SK-N-SH (cell line): ENCODE measurements at regions of chr1 and their contacts with region 1.

Region 1: GRCh38 chr1:7580923-7581753 is 190.0 kb upstream of the VAMP3 start:
- DNase-seq: no peak
- H3K4me3 ChIP-seq: no peak overlapping the region
- H3K27ac ChIP-seq: peak overlapping the region in 1 of 2 experiments; percentile 99; a peak in 2 of 4 replicates
- H3K4me1 ChIP-seq: peaks cover 0 to 49% of the 10 kb centered on the region in 2 experiments; a peak in 2 of 4 replicates
- H3K27me3 ChIP-seq: no peaks in the 10 kb centered on the region
- CTCF ChIP-seq: no peak
- EP300 ChIP-seq: no peak
- RAD21 ChIP-seq: no peak

Region 2: GRCh38 chr1:7549277-7550161 is 31.6 kb before region 1 on chr1:
- CTCF ChIA-PET with region 1: interaction called, 14 read pairs
- POLR2A ChIA-PET with region 1: no interaction called
- DNase-seq: no peak
- H3K4me3 ChIP-seq: no peak overlapping the region
- H3K27ac ChIP-seq: peak overlapping the region; percentile 11 to 75
- H3K4me1 ChIP-seq: peaks cover 11 to 41% of the 10 kb centered on the region in 2 experiments; a peak in 3 of 4 replicates
- H3K27me3 ChIP-seq: no peaks in the 10 kb centered on the region
- CTCF ChIP-seq: no peak
- EP300 ChIP-seq: 0 out of 4 replicates have a peak, but pooled peaks have one; percentile 20 to 25
- RAD21 ChIP-seq: no peak

Region 3: DNA sequence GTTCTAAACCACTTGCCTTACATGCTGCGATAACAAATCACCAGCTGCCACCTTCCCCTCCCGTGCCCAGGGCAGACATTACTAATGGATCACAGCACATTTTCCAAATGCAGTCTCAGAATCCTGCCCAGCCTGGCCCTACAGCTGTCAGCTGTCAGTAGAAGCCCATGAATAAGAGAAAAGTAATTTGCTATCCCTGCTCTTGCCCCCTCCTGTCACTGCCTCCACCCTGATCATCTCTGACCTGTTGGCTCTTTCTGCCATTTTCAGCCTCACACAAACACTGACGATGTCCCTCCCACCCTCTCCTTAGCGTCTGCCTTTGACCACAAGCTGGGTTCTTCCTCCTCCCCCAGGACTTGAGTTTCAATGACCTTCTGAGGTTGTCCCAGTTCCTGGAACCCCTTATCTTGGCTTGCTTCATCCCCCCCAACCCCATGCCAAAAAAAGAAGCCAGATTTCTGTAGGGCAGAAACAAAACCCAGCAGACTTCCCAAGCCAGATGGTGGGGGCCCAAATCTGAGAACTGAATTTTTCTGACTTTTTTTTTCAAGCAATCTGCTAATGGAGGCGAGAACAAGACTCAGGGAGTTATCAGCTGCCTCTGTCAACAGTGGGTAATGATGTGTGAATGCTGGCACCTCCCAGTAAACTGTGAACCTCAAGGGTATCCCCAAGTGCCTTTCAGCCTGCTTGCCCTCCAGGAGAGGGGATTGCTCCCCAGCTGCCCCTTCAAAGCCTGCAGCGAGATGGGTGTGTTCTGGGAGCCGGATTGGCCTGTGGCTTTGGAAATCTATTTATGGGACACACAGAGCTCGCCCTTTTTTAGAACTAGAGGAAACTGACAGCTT is 26.5 kb before region 1 on chr1:
- CTCF ChIA-PET with region 1: interaction called, 18 read pairs
- POLR2A ChIA-PET with region 1: interaction called, 43 read pairs
- DNase-seq: no peak
- H3K4me3 ChIP-seq: no peak overlapping the region
- H3K27ac ChIP-seq: peak overlapping the region in 1 of 2 experiments; percentile 100; a peak in 2 of 4 replicates
- H3K4me1 ChIP-seq: peaks cover 6 to 83% of the 10 kb centered on the region in 2 experiments; a peak in 3 of 4 replicates
- H3K27me3 ChIP-seq: no peaks in the 10 kb centered on the region
- CTCF ChIP-seq: no peak
- EP300 ChIP-seq: no peak
- RAD21 ChIP-seq: no peak

Region 4: DNA sequence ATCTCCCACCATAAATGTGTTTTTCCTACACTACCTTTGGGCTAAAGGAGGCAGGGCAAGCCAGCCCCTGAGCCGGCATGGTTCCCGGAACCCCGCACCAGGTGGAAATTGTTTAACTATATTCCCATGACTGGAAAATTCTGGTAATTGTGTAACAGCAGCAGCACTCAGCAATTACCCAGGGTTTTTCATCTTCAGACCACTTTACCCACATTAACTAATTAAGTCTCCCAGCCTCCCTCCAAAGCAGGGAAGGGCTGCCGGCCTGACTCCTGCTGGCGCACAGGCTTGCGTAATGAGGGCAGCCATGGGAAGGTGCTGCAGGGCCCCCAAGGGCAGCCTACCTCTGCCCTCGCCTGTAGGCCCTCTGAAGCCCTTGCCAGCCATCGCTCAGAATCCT is 49.2 kb after region 1 on chr1:
- CTCF ChIA-PET with region 1: interaction called, 32 read pairs
- POLR2A ChIA-PET with region 1: interaction called, 37 read pairs
- DNase-seq: peak; percentile 90
- H3K4me3 ChIP-seq: no peak overlapping the region
- H3K27ac ChIP-seq: peak overlapping the region; percentile 32 to 100; a peak in 3 of 4 replicates
- H3K4me1 ChIP-seq: peaks cover 0 to 89% of the 10 kb centered on the region in 2 experiments; a peak in 2 of 4 replicates
- H3K27me3 ChIP-seq: peaks cover 6% of the 10 kb centered on the region; the same call in 1 of the 2 replicates
- CTCF ChIP-seq: no peak
- EP300 ChIP-seq: peak in 1 of 2 experiments; percentile 93; a peak in 2 of 4 replicates
- RAD21 ChIP-seq: peak; percentile 41

Region 5: DNA sequence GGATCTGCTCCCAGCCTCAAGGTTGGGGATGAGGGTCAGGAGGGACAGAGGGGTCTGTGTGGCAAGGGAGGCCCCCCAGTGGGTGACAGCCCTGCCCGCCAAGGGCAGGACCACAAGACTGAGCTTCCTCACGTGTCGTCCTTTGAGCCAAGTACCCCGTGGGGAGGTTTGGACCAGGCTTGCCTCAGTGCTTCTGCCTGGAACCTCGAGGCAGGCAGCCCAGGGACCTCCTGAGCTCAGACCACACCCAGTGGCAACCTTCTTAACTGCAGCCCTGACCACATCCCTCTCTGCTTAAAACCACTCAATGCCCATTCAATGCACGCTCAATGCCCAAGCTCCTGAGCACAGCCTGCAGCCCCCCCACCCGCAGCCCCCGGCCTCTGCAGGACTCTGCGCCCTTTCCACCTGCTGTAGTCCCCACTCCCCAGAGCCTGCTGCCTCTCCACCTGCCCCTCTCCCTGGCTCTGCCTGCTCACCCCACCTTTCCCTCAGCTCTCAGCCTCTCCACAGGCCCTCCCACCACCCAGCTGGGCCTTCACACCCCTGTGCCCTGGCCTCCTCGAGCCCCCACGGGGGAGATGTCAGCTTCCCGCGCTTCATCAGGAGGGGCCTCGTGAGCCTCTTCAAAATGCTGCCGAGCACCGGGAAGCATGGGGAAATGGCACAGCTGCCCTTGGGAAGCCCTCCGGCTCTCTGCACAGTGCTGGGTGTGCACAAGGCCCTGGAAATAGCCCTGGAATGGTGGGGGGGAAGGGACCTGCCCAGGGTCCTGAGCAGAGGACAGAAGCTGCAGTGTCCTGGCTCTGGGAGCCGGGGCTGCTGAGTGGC is 60.7 kb after region 1 on chr1:
- CTCF ChIA-PET with region 1: interaction called, 20 read pairs
- POLR2A ChIA-PET with region 1: interaction called, 4 read pairs
- DNase-seq: no peak
- H3K4me3 ChIP-seq: no peak overlapping the region
- H3K27ac ChIP-seq: peak overlapping the region in 1 of 2 experiments; percentile 81; a peak in 2 of 4 replicates
- H3K4me1 ChIP-seq: peaks cover 0 to 71% of the 10 kb centered on the region in 2 experiments; a peak in 1 of 4 replicates
- H3K27me3 ChIP-seq: no peaks in the 10 kb centered on the region
- CTCF ChIP-seq: no peak
- EP300 ChIP-seq: no peak
- RAD21 ChIP-seq: peak; percentile 31

Region 6: GRCh38 chr1:7733276-7733675 is 152.1 kb after region 1 on chr1:
- CTCF ChIA-PET with region 1: no interaction called
- POLR2A ChIA-PET with region 1: no interaction called
- DNase-seq: no peak
- H3K4me3 ChIP-seq: no peak overlapping the region
- H3K27ac ChIP-seq: no peak overlapping the region
- H3K4me1 ChIP-seq: peaks cover 0 to under 1% of the 10 kb centered on the region in 2 experiments; a peak in 1 of 4 replicates
- H3K27me3 ChIP-seq: no peaks in the 10 kb centered on the region
- CTCF ChIP-seq: no peak
- EP300 ChIP-seq: no peak
- RAD21 ChIP-seq: no peak

Region 7: GRCh38 chr1:7873801-7874795 is 293.0 kb after region 1 on chr1:
- CTCF ChIA-PET with region 1: no interaction called
- POLR2A ChIA-PET with region 1: no interaction called
- DNase-seq: no peak
- H3K4me3 ChIP-seq: no peak overlapping the region
- H3K27ac ChIP-seq: no peak overlapping the region
- H3K4me1 ChIP-seq: no peaks in the 10 kb centered on the region
- H3K27me3 ChIP-seq: no peaks in the 10 kb centered on the region
- CTCF ChIP-seq: no peak
- EP300 ChIP-seq: no peak
- RAD21 ChIP-seq: no peak